Activated CD4-positive, alpha-beta memory T cell treated with anti-CD3 and anti-CD28 coated beads for 36 hours (primary cell): ENCODE measurements at regions of chr5 and their contacts with region 1.

Region 1: GRCh38 chr5:177071666-177072385 is 14.9 kb upstream of the FGFR4 start:
- DNase-seq: peak; percentile 48
- H3K4me3 Mint-ChIP-seq: no peak overlapping the region
- H3K27ac Mint-ChIP-seq: no peak overlapping the region
- H3K4me1 Mint-ChIP-seq: peaks cover 2% of the 10 kb centered on the region
- H3K27me3 Mint-ChIP-seq: no peaks in the 10 kb centered on the region

Region 2: DNA sequence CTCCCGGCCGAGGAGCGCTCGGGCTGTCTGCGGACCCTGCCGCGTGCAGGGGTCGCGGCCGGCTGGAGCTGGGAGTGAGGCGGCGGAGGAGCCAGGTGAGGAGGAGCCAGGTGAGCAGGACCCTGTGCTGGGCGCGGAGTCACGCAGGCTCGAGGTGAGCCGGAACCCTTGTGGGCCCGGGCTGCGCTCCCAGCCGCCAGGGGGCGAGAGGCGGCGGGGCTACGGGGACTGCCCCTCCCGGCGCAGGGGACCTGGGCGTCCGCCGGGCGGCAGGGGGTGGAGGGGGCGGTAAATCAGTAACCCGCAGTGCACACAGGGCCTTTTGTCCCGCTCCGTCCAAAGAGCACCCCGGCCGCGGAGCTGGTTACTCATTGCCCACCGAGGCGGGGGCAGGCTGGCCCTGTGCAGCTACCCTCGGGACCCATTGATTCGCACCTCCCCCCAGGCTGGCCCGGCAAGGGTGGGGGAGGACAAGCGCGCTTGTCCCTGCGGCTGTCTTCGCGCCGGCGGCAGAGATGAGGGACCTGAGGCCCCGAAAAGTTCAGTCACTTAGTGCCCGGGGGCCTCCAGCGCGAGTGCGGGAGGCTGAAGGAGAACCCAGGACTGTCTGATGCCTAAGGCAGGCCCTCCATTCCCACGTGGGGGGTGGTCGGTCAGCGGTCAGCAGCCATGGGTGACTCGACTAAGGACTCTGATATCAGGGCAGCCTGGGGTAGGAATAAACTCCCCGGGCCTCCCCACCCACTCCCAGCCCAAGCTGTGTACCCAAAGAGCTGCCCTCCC is 15.3 kb after region 1 on chr5:
- CTCF ChIA-PET with region 1: interaction called, 76 read pairs
- POLR2A ChIA-PET with region 1: no interaction called
- intact Hi-C with region 1: no loop called
- DNase-seq: peak; percentile 66
- H3K4me3 Mint-ChIP-seq: peak overlapping the region; percentile 25
- H3K27ac Mint-ChIP-seq: no peak overlapping the region
- H3K4me1 Mint-ChIP-seq: peaks cover 4% of the 10 kb centered on the region
- H3K27me3 Mint-ChIP-seq: peaks cover 8% of the 10 kb centered on the region